Pancreas (tissue), 10 donors: ENCODE measurements at regions of chr10 and their contacts with region 1.

Region 1: DNA sequence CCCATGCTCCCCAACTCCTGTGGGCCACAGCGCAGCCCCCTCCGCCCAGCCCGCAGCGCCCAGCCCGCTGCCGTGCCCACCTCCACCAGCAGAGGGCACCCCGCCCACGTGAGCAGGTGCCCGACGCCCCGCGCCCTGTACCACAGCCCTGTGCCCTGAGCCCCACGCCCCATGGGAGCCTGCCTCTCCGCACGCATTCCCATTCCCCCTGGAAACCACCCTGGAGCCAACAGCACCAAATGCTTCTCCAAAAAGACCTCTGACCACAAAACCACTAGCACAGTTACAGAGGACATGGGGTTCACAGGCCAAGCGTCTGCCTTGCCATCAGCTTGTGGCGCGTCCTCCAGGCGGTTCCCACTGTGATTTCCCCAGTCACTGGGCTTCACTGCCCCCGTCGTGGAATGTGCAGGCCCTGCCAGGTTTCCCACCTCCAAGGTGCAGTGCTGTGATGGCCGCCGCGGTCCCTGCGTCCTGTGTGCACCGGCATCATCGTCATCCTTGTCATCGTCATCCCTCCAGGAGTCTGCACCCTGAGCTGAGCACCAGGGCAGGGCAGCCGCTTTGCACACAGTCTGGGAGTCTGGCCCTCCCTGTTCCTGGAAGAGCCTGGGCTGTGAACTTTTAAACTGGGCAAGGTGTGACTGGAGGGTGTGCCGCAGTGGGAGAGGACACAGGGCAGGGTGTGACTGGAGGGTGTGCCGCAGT is 61.7 kb downstream of the PWWP2B start:
- DNase-seq: peak; percentile 20 to 91 (median 69)
- ATAC-seq: peak; percentile 72 to 84 (median 82)
- H3K4me3 ChIP-seq: no peak overlapping the region
- H3K27ac ChIP-seq: no peak overlapping the region
- H3K4me1 ChIP-seq: peaks cover 11 to 18% (median 16%) of the 10 kb centered on the region in 3 donors
- H3K27me3 ChIP-seq: no peaks in the 10 kb centered on the region
- CTCF ChIP-seq: peak; percentile 84 to 96 (median 92)

Region 2: GRCh38 chr10:131921184-131921583 is 537.6 kb before region 1 on chr10:
- intact Hi-C with region 1: no loop called
- DNase-seq: no peak
- ATAC-seq: peak in 2 of 4 donors; percentile 30 to 48
- H3K4me3 ChIP-seq: no peak overlapping the region
- H3K27ac ChIP-seq: no peak overlapping the region
- H3K4me1 ChIP-seq: peaks cover 0 to 5% (median 0%) of the 10 kb centered on the region in 3 donors
- H3K27me3 ChIP-seq: no peaks in the 10 kb centered on the region
- CTCF ChIP-seq: no peak

Region 3: GRCh38 chr10:132223156-132223590 is 235.6 kb before region 1 on chr10:
- intact Hi-C with region 1: loop called in 2 of 3 experiments (anchors 5 kb)
- DNase-seq: peak; percentile 60 to 92 (median 80)
- ATAC-seq: peak; percentile 92 to 99 (median 98)
- H3K4me3 ChIP-seq: no peak overlapping the region
- H3K27ac ChIP-seq: no peak overlapping the region
- H3K4me1 ChIP-seq: no peaks in the 10 kb centered on the region
- H3K27me3 ChIP-seq: no peaks in the 10 kb centered on the region
- CTCF ChIP-seq: peak; percentile 64 to 86 (median 84)

Region 4: GRCh38 chr10:132575356-132576201 is 116.8 kb after region 1 on chr10:
- intact Hi-C with region 1: loop called in 1 of 3 experiments (anchors 5 kb)
- DNase-seq: peak in 3 of 6 donors; percentile 32 to 49 (median 36)
- ATAC-seq: peak; percentile 17 to 67 (median 56)
- H3K4me3 ChIP-seq: no peak overlapping the region
- H3K27ac ChIP-seq: peak overlapping the region; percentile 36 to 58 (median 58)
- H3K4me1 ChIP-seq: peaks cover 46 to 52% (median 47%) of the 10 kb centered on the region in 3 donors
- H3K27me3 ChIP-seq: no peaks in the 10 kb centered on the region
- CTCF ChIP-seq: no peak

Region 5: DNA sequence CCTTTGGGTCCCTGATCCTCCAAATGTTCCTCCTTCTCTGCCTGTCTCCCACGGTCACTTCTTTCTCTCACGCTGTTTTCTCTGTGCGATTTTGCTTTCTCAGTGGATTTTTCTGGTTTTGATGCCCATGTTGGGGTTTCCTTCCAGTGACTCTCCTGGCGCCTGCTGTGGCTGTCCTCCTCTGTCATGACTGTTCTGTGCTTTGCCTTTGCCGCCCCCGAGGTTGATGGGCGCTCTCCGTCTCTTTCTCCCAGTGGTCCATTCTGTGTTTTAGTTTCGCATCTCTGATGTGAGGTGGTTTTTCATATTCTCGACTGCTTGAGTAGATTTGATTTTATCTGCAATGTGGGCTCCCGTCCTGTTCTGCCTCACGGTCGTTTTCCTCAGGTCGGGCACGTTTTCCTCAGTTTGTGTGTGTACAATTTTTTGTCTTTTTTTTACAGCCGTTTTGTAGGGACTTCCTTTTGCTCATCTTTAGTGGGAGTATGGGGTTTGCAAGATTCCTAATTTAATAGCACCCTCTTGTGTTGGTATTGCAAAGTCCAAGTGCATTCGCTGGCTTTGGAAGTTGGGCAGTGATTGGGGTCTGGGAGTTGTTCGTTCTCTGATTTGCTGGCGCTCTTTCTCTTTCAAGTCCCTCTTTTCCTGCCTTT is 178.9 kb after region 1 on chr10:
- intact Hi-C with region 1: loop called (anchors 5 to 10 kb)
- DNase-seq: peak in 1 of 6 donors; percentile 44
- ATAC-seq: peak; percentile 53 to 87 (median 82)
- H3K4me3 ChIP-seq: no peak overlapping the region
- H3K27ac ChIP-seq: no peak overlapping the region
- H3K4me1 ChIP-seq: peaks cover 0 to 3% (median under 1%) of the 10 kb centered on the region in 3 donors
- H3K27me3 ChIP-seq: no peaks in the 10 kb centered on the region
- CTCF ChIP-seq: peak in 3 of 4 donors; percentile 23 to 54 (median 51)

Region 6: DNA sequence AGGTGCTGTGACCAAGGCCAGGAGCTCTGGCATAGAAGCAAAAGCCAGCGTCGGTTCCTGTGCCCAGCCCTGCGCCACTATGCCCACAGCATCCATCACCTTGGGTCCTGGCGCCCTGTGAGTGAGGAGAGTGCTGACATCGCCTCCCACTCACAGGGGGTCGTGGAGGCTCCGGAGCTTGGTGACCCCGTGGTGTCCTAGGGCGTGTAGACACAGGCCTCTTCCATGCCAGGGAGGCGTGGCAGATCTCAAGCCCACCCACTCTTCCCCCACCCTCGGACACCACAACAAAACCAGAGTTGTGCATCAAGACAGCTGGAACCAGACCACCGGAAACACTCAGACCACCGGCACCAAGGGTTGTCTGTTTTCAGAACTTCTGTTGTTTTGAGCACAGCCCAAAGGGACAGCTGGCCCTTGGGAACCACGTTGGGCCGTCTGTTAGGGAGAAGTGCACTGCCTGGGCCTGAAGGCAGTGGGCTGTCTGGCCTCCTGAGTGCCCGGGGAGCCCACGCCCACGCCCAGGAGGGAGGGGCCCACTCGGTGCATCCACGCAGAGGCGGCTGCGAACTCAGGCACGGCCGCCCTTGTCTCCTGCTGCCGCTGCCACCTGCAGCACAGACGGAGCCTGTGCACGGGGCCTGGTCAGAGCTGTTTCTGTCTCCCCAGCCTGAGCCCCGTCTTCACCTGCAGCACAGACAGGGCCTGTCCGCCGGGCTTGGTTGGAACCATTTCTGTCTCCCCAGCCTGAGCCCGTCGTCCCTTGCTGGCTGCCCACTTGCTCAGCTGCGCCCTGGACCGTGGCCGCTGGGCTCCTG is 185.2 kb after region 1 on chr10:
- intact Hi-C with region 1: loop called (anchors 5 to 10 kb)
- DNase-seq: peak in 1 of 6 donors; percentile 54
- ATAC-seq: no peak
- H3K4me3 ChIP-seq: no peak overlapping the region
- H3K27ac ChIP-seq: no peak overlapping the region
- H3K4me1 ChIP-seq: no peaks in the 10 kb centered on the region
- H3K27me3 ChIP-seq: no peaks in the 10 kb centered on the region
- CTCF ChIP-seq: no peak

Region 7: GRCh38 chr10:132665946-132666704 is 207.4 kb after region 1 on chr10:
- intact Hi-C with region 1: no loop called
- DNase-seq: peak in 1 of 6 donors; percentile 32
- ATAC-seq: peak in 2 of 4 donors; percentile 28 to 56
- H3K4me3 ChIP-seq: no peak overlapping the region
- H3K27ac ChIP-seq: no peak overlapping the region
- H3K4me1 ChIP-seq: no peaks in the 10 kb centered on the region
- H3K27me3 ChIP-seq: no peaks in the 10 kb centered on the region
- CTCF ChIP-seq: no peak